ENCODE measurements at regions of chr14 and their contacts with region 1.

Region 1: DNA sequence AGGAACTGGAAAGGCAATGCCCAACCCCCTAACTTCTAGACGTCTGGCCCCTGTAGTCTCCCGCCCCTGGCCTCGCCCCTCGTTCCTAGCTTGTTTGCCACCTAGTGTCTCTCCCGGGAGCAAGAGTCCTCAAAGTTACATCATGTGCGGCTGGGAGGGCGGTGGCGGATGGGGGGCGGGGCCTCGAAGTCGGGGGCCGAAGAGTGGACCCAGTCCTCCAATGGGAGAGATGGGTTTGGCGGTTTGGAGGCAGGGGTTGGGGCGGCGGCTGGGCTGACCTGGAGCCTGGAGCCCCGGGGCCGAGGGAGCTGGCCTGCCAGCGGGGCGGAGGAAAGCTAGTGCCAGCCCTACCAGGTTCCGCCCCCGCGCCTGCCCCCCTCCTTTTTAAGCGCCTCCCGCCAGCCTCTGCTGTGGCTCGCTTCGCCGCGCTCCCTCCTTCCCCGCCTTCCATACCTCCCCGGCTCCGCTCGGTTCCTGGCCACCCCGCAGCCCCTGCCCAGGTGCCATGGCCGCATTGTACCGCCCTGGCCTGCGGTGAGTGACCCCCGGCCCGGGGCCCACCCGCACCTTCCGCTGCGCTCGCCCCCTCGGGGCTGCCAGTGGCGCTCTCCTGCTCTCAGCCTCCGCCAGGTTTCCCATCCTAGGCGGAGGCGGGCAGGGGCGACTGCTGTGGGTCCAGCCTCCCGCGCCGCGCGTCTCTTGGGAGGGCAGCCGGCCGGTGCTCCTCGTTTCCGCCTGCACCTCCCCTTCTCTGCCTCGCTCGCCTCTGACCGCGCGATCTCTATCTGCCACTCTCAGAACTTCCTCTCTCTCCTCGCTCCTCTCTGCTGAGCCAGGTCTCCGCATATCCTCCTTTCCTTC is at the start of gene PCK2:
- DNase-seq: peak; percentile 83 to 93
- H3K4me3 ChIP-seq: peak within 1 kb of the TSS; percentile 78
- H3K27ac ChIP-seq: peak within 1 kb of the TSS; percentile 83
- H3K4me1 ChIP-seq: peaks cover 12% of the 10 kb centered on the region
- H3K27me3 ChIP-seq: no peaks in the 10 kb centered on the region
- CTCF ChIP-seq: no peak
- total RNA-seq, gene PCK2: 77.4 and 113 TPM in 2 replicates

Region 2: GRCh38 chr14:24013654-24014514 is 80.2 kb before region 1 on chr14:
- CTCF ChIA-PET with region 1: no interaction called
- POLR2A ChIA-PET with region 1: no interaction called
- intact Hi-C with region 1: loop called (anchors 2 kb)
- DNase-seq: peak; percentile 37 to 40
- H3K4me3 ChIP-seq: no peak overlapping the region
- H3K27ac ChIP-seq: no peak overlapping the region
- H3K4me1 ChIP-seq: no peaks in the 10 kb centered on the region
- H3K27me3 ChIP-seq: no peaks in the 10 kb centered on the region
- CTCF ChIP-seq: peak; percentile 85

Region 3: DNA sequence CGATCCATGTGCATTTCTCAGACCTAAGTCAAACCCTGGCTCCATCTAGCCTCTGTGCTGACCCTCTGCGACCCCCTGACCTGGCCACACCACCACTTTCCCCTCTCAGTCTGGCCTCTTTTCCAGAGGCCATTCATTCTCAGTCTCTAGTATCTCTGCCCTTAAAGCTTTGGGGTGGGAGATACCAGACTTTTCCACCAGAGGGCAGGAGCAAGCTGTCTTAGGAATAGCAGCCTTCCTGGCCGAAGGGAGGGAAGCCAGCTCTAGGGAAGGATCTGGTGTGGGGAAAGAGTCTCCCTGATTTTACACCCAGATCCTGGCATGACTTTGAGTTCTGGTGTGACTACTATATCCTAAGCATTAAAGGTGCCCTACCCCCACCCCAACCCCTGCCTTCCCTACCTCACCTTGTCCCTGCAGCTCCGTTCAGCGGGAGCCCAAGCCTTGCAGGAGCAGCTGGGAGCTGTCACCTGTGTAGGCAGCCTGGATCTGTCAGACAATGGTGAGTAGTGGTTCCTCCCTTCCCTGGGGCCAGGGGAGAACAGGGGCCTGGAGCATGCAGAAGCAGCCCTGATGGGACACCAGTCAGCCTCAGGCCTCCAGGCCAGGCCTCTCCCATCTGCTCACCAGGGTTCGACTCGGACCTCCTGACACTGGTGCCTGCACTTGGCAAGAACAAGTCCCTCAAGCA is 35.7 kb before region 1 on chr14:
- CTCF ChIA-PET with region 1: interaction called, 5 read pairs
- POLR2A ChIA-PET with region 1: interaction called, 3 read pairs
- intact Hi-C with region 1: loop called (anchors 1 kb)
- DNase-seq: peak in 1 of 2 experiments; percentile 70
- H3K4me3 ChIP-seq: no peak overlapping the region
- H3K27ac ChIP-seq: no peak overlapping the region
- H3K4me1 ChIP-seq: no peaks in the 10 kb centered on the region
- H3K27me3 ChIP-seq: peaks cover 24% of the 10 kb centered on the region
- CTCF ChIP-seq: peak; percentile 84

Region 4: GRCh38 chr14:24079491-24080141 is 14.5 kb before region 1 on chr14:
- CTCF ChIA-PET with region 1: interaction called, 5 read pairs
- POLR2A ChIA-PET with region 1: interaction called, 11 read pairs
- intact Hi-C with region 1: no loop called
- DNase-seq: no peak
- H3K4me3 ChIP-seq: no peak overlapping the region
- H3K27ac ChIP-seq: no peak overlapping the region
- H3K4me1 ChIP-seq: peaks cover 10% of the 10 kb centered on the region; the same call in 1 of the 2 replicates
- H3K27me3 ChIP-seq: no peaks in the 10 kb centered on the region
- CTCF ChIP-seq: no peak

Region 5: DNA sequence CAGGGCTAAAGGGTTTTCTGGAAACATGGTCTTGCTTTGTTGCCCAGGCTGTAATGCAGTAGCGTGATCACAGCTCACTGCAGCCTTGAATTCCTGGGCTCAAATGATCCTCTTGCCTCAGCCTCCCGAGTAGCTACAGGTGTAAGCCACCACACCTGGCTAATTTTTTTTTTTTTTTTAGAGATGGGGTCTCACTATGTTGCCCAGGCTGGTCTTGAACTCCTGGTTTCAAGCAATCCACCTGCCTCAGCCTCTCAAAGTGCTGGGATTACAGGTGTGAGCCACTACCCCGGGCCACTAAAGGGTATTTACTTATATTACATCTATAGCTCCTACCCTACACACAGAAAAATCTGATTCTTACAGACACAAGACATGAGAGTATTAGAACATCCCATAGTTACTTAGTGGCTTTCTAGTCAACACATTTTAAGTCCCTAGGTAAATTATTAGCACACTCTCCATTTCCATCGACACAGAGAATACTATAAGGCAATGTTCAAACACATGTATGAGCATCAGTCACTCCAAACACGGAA is 14.3 kb after region 1 on chr14:
- CTCF ChIA-PET with region 1: interaction called, 25 read pairs
- POLR2A ChIA-PET with region 1: interaction called, 3 read pairs
- intact Hi-C with region 1: loop called (anchors 1 kb)
- DNase-seq: no peak
- H3K4me3 ChIP-seq: no peak overlapping the region
- H3K27ac ChIP-seq: no peak overlapping the region
- H3K4me1 ChIP-seq: peaks cover 21% of the 10 kb centered on the region
- H3K27me3 ChIP-seq: no peaks in the 10 kb centered on the region
- CTCF ChIP-seq: no peak

Region 6: DNA sequence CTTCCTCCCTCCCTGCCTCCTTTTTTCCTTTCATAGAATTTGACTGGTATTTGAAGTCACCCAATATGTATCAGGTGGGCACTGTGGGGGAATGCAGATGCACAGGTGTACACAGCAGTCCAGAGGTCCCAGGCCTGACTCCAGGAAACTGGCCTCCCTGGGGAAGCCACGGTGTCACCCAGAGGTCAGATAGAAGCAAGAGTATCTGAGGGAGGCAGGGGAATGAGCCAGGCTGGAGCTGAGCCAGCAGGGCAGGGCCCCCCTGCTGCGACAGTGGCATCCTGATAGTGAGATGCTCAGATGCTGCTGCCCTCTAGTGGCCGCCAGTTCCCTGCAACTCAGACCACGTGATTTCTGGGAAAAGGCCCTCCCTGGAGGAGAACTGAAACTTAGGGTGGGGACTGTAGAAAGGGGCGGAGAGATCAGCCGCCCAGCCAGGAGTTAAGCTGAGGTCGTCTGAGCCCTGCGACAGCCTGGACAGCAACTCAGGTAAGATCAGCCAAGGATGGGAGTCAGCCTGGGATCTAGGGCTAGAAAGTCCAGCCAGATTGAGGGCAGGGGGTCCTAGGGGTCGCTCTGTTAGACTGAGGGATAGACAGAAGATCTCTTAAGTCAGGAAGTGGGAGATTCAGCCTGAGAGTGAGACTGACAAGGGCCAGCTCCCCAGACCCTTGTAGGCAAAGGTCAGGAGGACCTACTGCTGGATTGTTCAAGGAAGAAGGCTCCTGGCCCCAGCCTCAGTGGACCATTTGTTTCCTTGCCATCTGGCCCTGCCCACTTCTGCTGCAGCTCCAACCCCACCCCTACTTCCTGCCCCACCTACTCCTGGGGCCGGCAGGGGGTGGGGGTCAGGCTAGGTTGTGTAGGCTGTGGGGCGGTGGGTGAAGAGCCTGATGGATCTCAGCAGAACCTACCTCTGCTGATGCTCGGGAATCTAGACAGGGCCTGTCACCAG is 67.0 kb after region 1 on chr14 and contains the start of gene IRF9:
- CTCF ChIA-PET with region 1: no interaction called
- POLR2A ChIA-PET with region 1: no interaction called
- intact Hi-C with region 1: loop called (anchors 5 kb)
- DNase-seq: peak; percentile 82 to 95
- H3K4me3 ChIP-seq: peak within 1 kb of the TSS; percentile 41; the same call in 1 of the 2 replicates
- H3K27ac ChIP-seq: no peak within 1 kb of the TSS
- H3K4me1 ChIP-seq: peaks cover 13% of the 10 kb centered on the region
- H3K27me3 ChIP-seq: no peaks in the 10 kb centered on the region
- CTCF ChIP-seq: peak; percentile 88
- total RNA-seq, gene IRF9: 18.8 and 21.4 TPM in 2 replicates

Region 7: DNA sequence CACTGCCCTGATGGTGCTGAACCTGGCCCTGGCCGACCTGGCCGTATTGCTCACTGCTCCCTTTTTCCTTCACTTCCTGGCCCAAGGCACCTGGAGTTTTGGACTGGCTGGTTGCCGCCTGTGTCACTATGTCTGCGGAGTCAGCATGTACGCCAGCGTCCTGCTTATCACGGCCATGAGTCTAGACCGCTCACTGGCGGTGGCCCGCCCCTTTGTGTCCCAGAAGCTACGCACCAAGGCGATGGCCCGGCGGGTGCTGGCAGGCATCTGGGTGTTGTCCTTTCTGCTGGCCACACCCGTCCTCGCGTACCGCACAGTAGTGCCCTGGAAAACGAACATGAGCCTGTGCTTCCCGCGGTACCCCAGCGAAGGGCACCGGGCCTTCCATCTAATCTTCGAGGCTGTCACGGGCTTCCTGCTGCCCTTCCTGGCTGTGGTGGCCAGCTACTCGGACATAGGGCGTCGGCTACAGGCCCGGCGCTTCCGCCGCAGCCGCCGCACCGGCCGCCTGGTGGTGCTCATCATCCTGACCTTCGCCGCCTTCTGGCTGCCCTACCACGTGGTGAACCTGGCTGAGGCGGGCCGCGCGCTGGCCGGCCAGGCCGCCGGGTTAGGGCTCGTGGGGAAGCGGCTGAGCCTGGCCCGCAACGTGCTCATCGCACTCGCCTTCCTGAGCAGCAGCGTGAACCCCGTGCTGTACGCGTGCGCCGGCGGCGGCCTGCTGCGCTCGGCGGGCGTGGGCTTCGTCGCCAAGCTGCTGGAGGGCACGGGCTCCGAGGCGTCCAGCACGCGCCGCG is 221.9 kb after region 1 on chr14:
- CTCF ChIA-PET with region 1: no interaction called
- POLR2A ChIA-PET with region 1: no interaction called
- intact Hi-C with region 1: no loop called
- DNase-seq: no peak
- H3K4me3 ChIP-seq: no peak overlapping the region
- H3K27ac ChIP-seq: no peak overlapping the region
- H3K4me1 ChIP-seq: no peaks in the 10 kb centered on the region
- H3K27me3 ChIP-seq: no peaks in the 10 kb centered on the region
- CTCF ChIP-seq: no peak

Measured in PC-9 (cell line).